Activated T-helper 1 cell treated with anti-CD3 and anti-CD28 coated beads, Interleukin-12 subunit alpha, Interleukin-12 subunit beta, Interleukin-2, Interleukin-4 antibody, amounts not matched to agents 30 ng/mL and 10 ng/mL and 1 ng/mL, durations not matched to agents 14 hours and 24 hours and 36 hours (primary cell): ENCODE measurements at regions of chr12 and their contacts with region 1.

Region 1: DNA sequence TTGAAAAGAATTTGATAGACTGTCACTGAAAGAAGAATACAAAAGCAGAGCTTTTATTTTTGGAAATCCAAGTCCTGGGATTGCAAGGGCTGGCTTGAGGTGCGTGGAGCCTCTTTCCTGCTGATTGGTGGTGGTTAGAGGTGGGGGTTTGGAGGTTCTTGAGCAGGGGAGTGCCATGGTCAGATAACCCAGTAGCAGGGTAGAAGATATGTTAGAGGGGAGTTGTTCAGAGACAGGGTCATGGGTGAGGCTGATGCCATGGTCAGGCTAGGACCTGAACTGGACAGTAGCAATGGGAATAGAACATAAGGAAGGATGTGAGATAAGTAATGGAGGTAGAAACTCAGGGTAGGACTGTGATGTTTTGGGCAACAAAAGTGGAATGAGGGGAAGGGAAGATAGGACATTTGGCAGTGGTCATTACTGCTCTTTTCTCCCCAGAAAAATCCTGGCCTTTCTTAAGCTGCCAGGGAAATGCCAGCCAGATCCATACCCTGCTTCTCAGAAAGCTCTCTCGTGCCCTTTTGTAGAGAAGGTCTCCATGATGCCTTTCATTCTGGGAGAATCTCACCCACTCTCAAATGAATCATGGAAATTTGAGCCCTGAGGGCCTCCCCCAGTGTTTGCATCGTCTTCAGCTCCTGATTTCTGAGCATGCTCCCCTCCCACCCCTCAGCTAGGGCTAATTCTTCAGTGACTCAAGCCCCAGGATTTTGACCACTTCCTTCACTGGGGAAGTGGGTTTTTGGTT is 9.5 kb downstream of the EMP1 start:
- DNase-seq: no peak
- H3K4me3 Mint-ChIP-seq: peak overlapping the region; percentile 19
- H3K27ac Mint-ChIP-seq: peak overlapping the region; percentile 75
- H3K4me1 Mint-ChIP-seq: peaks cover 67% of the 10 kb centered on the region
- H3K27me3 Mint-ChIP-seq: peaks cover 9% of the 10 kb centered on the region

Region 2: GRCh38 chr12:13173012-13173932 is 32.7 kb before region 1 on chr12:
- intact Hi-C with region 1: loop called (anchors 1 kb)
- DNase-seq: peak; percentile 12
- H3K4me3 Mint-ChIP-seq: no peak overlapping the region
- H3K27ac Mint-ChIP-seq: peak overlapping the region; percentile 51
- H3K4me1 Mint-ChIP-seq: peaks cover 25% of the 10 kb centered on the region
- H3K27me3 Mint-ChIP-seq: peaks cover 41% of the 10 kb centered on the region